ENCODE measurements at regions of chr6 and their contacts with region 1.

Region 1: DNA sequence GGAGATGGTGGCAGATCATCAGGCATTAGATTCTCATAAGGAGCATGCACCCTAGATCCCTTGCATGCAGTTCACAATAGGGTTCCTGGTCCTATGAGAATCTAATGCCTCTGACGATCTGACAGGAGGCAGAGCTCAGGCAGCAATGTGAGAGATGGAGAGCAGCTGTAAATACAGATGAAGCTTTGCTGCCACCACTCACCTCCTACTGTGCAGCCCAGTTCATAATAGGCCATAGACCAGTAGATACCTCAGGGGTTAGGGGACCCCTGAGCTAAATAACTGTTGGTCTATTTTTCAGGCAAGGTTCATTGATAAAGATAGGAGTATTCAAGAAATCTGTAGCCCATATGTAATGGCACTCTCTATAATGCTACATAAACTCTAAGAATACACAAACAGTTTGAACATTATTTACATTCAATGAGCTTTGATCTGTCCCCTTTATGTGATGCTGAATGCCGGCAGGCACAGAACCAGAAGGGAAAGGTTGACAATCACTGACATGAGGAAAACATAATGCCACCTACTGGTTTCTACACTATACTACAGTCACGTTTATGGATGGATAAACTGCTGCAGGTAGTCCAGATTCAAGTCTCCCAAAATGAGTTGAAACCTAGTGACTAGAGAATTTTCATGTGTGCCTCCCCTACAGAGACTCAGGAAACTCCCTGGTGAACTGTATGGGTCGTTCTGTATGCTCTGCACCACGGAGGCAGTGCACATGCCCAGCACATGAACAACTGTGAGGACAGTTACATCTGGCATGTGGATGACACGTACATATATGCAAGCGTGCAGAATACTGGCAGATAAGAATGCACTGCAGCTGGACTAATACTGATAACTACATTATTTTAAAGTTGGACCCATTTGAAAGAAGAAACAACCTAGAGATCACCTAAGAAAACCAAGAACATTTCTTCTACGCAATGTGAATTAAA is 72.0 kb downstream of the DST start:
- DNase-seq: no peak
- H3K4me3 ChIP-seq: no peak overlapping the region
- H3K27ac ChIP-seq: no peak overlapping the region
- H3K4me1 ChIP-seq: no peaks in the 10 kb centered on the region
- H3K27me3 ChIP-seq: no peaks in the 10 kb centered on the region
- CTCF ChIP-seq: peak; percentile 60 to 68

Region 2: DNA sequence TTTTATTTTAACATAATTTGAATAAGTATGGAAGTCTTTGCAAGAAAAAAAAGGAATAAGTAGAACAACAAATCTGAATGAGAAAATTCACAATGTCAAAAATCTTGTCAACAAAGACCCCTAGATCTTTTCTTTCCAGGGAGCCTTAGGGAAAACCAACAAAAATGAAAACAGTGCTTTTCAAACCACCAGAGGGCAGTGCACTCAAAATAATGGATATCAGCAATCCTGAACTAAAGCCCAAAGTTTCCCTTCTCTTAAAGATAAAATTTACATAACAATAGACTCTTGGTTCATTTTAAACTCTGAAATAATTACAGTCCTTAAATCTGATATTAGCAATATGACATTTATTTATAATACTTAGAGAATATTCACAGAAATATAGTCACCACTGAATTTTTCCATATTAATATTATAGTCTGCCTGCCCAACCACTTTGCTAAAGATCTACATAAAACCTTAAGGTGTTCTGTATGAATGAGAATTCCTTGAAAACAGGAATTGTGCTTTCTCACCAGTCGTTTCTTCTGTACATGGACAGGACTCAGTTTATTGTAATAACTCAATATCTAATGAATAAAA is 590.0 kb before region 1 on chr6:
- CTCF ChIA-PET with region 1: no interaction called
- dilution Hi-C with region 1: no loop called
- in situ Hi-C with region 1: loop called in 1 of 2 experiments (anchors 25 kb)
- intact Hi-C with region 1: no loop called
- DNase-seq: peak; percentile 8
- H3K4me3 ChIP-seq: no peak overlapping the region
- H3K27ac ChIP-seq: no peak overlapping the region
- H3K4me1 ChIP-seq: no peaks in the 10 kb centered on the region
- H3K27me3 ChIP-seq: peaks cover 2% of the 10 kb centered on the region
- CTCF ChIP-seq: peak; percentile 42 to 65

Region 3: GRCh38 chr6:56314683-56315523 is 255.8 kb before region 1 on chr6:
- CTCF ChIA-PET with region 1: no interaction called
- dilution Hi-C with region 1: no loop called
- in situ Hi-C with region 1: no loop called
- intact Hi-C with region 1: loop called (anchors 2 kb)
- DNase-seq: peak; percentile 41
- H3K4me3 ChIP-seq: no peak overlapping the region
- H3K27ac ChIP-seq: no peak overlapping the region
- H3K4me1 ChIP-seq: no peaks in the 10 kb centered on the region
- H3K27me3 ChIP-seq: no peaks in the 10 kb centered on the region
- CTCF ChIP-seq: peak; percentile 86

Region 4: DNA sequence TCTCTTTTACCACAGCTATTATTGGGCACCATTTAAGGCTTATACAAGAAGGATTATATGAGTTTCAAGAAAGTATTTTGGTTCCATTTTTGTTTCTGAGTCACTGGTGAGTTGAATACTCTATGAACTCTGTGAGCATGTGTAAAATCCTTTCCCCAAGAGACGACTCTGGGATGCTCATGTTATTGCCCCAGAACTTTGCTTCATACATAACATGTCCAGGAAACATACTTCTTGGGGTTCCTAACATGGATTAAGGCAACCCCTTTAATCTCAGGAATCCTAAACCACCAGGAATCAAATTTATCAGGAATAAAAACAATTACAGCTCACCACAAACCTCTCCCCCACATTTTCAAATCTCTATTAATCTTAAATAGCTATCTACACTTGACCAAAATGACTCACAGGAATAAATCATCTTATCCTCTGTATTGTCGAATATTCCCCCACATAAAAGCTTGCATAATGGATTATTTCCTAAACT is 205.8 kb before region 1 on chr6:
- CTCF ChIA-PET with region 1: no interaction called
- dilution Hi-C with region 1: no loop called
- in situ Hi-C with region 1: loop called (anchors 10 kb)
- intact Hi-C with region 1: loop called (anchors 1 kb)
- DNase-seq: peak; percentile 68
- H3K4me3 ChIP-seq: no peak overlapping the region
- H3K27ac ChIP-seq: peak overlapping the region; percentile 33
- H3K4me1 ChIP-seq: peaks cover 28% of the 10 kb centered on the region
- H3K27me3 ChIP-seq: no peaks in the 10 kb centered on the region
- CTCF ChIP-seq: no peak

Region 5: DNA sequence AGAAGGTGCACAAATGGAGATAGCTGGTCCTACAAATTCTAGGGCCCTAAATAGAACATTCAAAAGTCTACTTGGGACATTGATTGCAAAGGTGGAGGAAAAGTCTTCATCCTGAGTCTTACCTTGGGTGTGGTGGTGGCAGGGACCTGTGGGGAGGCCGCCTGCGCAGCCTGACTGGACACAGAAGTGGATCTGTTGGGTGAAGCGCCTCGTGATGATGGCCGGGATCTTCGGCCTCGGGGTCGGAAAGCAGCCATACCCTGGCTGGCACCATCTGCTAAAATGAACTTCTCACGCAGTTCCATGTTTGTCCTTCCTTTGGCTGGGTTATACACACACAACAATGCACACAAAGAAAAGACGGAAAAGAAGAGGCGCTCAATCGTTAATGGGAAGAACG is 107.2 kb before region 1 on chr6:
- CTCF ChIA-PET with region 1: no interaction called
- dilution Hi-C with region 1: no loop called
- in situ Hi-C with region 1: no loop called
- intact Hi-C with region 1: loop called (anchors 10 kb)
- DNase-seq: no peak
- H3K4me3 ChIP-seq: no peak overlapping the region
- H3K27ac ChIP-seq: no peak overlapping the region
- H3K4me1 ChIP-seq: no peaks in the 10 kb centered on the region
- H3K27me3 ChIP-seq: no peaks in the 10 kb centered on the region
- CTCF ChIP-seq: no peak